H1 (cell line): ENCODE measurements at regions of chr17 and their contacts with region 1.

Region 1: GRCh38 chr17:17890773-17891759 is 54.3 kb upstream of the SREBF1 start:
- DNase-seq: no peak
- H3K4me3 ChIP-seq: no peak overlapping the region
- H3K27ac ChIP-seq: no peak overlapping the region
- H3K4me1 ChIP-seq: peaks cover 3 to 6% (median 4%) of the 10 kb centered on the region in 4 experiments
- H3K27me3 ChIP-seq: no peaks in the 10 kb centered on the region
- CTCF ChIP-seq: peak; percentile 88 to 94 (median 92)
- EP300 ChIP-seq: no peak
- POLR2A ChIP-seq: no peak
- RAD21 ChIP-seq: peak; percentile 87 to 92

Region 2: GRCh38 chr17:17859909-17860765 is 30.9 kb before region 1 on chr17:
- CTCF ChIA-PET with region 1: interaction called, 404 read pairs
- POLR2A ChIA-PET with region 1: no interaction called
- DNase-seq: peak in 1 of 2 experiments; percentile 86
- H3K4me3 ChIP-seq: no peak overlapping the region
- H3K27ac ChIP-seq: no peak overlapping the region
- H3K4me1 ChIP-seq: peaks cover 0 to 10% (median 3%) of the 10 kb centered on the region in 4 experiments; a peak in 2 of 7 replicates
- H3K27me3 ChIP-seq: no peaks in the 10 kb centered on the region
- CTCF ChIP-seq: peak; percentile 96 to 100 (median 99)
- EP300 ChIP-seq: peak in 1 of 2 experiments; percentile 63; a peak in 1 of 3 replicates
- POLR2A ChIP-seq: no peak
- RAD21 ChIP-seq: peak; percentile 94 to 96

Region 3: DNA sequence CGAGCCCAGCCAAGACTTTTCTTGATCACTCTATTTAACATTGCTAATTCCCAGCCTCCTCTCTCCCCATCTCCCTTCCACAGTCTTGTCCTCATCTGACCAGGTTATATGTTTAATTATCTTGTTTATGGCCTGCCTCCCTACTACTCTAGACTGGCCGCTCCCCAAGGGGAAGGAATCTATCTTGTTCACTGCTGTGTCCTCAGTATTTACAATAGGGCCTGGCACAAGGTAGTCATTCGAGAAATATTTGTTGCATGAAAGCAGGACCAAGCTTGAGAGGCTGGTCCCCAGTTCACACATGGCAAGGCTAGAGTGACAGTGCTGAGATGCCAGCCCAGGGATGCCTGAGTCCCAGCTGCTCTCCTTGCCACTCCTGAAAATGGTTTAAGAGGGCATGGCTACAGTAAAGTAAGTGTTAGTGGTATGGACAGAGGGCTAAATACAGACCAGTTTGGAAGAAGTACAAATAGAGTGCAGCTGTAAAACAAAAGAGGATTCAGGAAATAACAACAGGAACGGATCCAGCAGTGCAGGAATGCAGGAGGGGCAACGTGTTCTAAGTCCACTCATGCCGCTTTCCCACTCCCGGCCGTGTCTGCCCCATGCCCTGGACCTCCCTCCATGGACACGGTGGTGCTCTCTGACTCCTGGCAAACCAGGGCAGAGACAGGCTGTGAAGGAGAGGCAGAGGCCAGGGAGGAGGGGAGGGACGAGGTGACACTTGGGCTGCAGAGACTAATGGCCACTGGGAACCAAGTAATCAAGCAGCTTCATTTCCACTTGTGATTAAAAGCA is 15.6 kb after region 1 on chr17:
- CTCF ChIA-PET with region 1: interaction called, 43 read pairs
- POLR2A ChIA-PET with region 1: interaction called, 3 read pairs
- DNase-seq: no peak
- H3K4me3 ChIP-seq: no peak overlapping the region
- H3K27ac ChIP-seq: no peak overlapping the region
- H3K4me1 ChIP-seq: peaks cover 0 to 8% (median 4%) of the 10 kb centered on the region in 4 experiments; a peak in 3 of 7 replicates
- H3K27me3 ChIP-seq: no peaks in the 10 kb centered on the region
- CTCF ChIP-seq: no peak
- EP300 ChIP-seq: no peak
- POLR2A ChIP-seq: no peak
- RAD21 ChIP-seq: no peak

Region 4: DNA sequence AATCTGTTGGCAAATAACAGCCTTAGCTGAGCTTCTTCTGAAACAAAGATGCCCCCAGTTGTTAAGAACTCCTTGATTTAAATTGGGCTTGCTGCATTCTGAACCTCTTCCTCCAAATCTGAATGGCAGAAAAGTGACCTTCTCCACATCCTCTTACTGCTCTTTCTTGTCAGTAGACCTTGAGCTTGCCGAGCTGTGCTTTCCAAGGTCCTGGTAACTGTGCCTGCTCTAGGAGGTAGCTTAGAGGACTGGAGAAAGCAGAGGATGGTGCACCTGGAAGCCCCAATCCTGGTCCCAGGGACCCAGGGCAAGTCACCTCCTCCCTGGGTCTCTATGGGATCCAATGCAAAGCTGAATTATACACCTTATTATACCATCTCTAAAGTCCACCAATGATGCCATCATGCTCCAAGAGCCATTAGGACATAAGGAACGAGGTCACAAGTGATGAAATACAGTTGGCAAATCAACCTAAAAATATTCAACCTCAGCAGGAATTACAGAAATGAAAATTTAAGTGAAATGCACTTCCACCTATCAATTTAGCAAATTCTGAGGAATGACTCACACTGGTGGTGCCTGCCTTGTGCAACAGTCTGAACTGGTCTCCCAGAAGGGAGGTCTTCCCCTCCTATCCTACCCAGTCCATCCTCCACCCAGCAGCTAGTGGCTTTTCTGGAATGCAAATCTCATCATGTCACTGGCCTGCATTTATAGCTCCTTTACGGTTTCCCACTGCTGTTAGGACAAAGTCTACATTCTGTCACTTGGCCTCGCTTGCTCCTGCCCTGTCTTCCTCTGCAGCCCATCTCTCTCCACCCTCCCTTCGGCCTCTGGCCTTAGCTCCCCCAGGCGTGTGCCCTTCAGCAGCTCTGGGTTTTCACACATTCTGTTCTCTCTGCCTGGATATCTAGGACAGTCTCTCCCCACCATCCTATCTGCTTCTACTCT is 44.5 kb after region 1 on chr17:
- CTCF ChIA-PET with region 1: interaction called, 10 read pairs
- POLR2A ChIA-PET with region 1: interaction called, 3 read pairs
- DNase-seq: no peak
- H3K4me3 ChIP-seq: no peak overlapping the region
- H3K27ac ChIP-seq: no peak overlapping the region
- H3K4me1 ChIP-seq: no peaks in the 10 kb centered on the region
- H3K27me3 ChIP-seq: 0 out of 7 replicates have a peak, but pooled peaks cover 0 to 2% (median 0%) of the 10 kb centered on the region in 4 experiments
- CTCF ChIP-seq: no peak
- EP300 ChIP-seq: no peak
- POLR2A ChIP-seq: no peak
- RAD21 ChIP-seq: no peak

Region 5: GRCh38 chr17:17994271-17995069 is 103.4 kb after region 1 on chr17:
- CTCF ChIA-PET with region 1: interaction called, 10 read pairs
- POLR2A ChIA-PET with region 1: no interaction called
- DNase-seq: peak; percentile 53 to 77
- H3K4me3 ChIP-seq: no peak overlapping the region
- H3K27ac ChIP-seq: no peak overlapping the region
- H3K4me1 ChIP-seq: peaks cover 0 to 5% (median 0%) of the 10 kb centered on the region in 4 experiments; a peak in 4 of 7 replicates
- H3K27me3 ChIP-seq: no peaks in the 10 kb centered on the region; a peak in 1 of 7 replicates
- CTCF ChIP-seq: peak; percentile 77 to 86 (median 80)
- EP300 ChIP-seq: no peak
- POLR2A ChIP-seq: no peak
- RAD21 ChIP-seq: peak; percentile 54 to 71

Region 6: GRCh38 chr17:18033442-18034099 is 142.5 kb after region 1 on chr17:
- CTCF ChIA-PET with region 1: interaction called, 32 read pairs
- POLR2A ChIA-PET with region 1: no interaction called
- DNase-seq: peak in 1 of 2 experiments; percentile 13
- H3K4me3 ChIP-seq: no peak overlapping the region
- H3K27ac ChIP-seq: no peak overlapping the region
- H3K4me1 ChIP-seq: peaks cover 0 to 3% (median 0%) of the 10 kb centered on the region in 4 experiments; a peak in 2 of 7 replicates
- H3K27me3 ChIP-seq: no peaks in the 10 kb centered on the region
- CTCF ChIP-seq: peak in 2 of 3 experiments; percentile 60 to 69; a peak in 3 of 4 replicates
- EP300 ChIP-seq: no peak
- POLR2A ChIP-seq: no peak
- RAD21 ChIP-seq: peak; percentile 88